Posterior vena cava (tissue), 2 donors: ENCODE measurements at regions of chr5 and their contacts with region 1.

Region 1: DNA sequence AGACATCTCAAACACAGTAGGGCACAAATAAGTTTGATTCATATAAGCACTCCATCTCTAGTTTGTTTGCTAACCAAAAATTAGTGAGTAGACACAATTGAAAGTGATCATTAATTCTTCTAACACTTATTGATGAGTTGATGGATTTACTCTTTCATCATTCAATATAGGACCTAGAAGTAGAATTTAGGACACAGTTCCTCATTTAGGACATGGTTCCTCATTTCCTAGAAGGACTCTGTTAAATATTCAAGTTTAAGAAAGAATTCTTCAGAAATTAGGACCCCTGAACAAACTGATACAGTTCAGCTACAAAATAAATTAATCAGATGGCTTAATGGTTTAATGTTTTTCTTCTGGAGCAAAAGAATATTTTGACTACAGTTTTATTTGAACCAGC is 143.5 kb upstream of the PRR16 start:
- DNase-seq: no peak

Region 2: GRCh38 chr5:120396186-120396585 is 75.6 kb after region 1 on chr5:
- intact Hi-C with region 1: loop called in 1 of 2 experiments (anchors 2 kb)
- DNase-seq: no peak